Lower leg skin (tissue), 4 donors: ENCODE measurements at regions of chr15 and their contacts with region 1.

Region 1: GRCh38 chr15:25811481-25811906 is 51.6 kb downstream of the ATP10A start:
- DNase-seq: peak in 1 of 2 donors; percentile 54
- H3K4me3 ChIP-seq: no peak overlapping the region
- CTCF ChIP-seq: no peak
- POLR2A ChIP-seq: no peak

Region 2: DNA sequence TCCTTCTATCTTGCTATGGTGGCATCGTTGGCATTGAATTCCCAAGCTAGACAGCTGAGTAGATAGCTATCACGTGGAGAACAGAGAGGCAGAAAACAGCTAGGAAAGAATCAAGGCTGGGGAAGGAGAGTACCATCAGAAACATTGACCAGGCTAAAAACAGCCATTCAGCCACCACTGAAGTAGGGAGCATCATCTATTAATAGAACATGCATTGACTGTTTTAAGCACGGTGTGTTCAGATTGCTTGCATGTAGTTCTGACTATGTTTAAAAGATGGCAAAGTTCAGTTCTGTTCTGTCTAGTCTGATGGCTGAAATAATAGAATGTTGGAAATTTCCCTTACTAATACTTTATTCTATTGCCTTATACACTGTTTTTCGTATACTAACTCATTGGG is 548.4 kb after region 1 on chr15:
- intact Hi-C with region 1: loop called (anchors 5 kb)
- DNase-seq: no peak
- H3K4me3 ChIP-seq: no peak overlapping the region
- CTCF ChIP-seq: no peak
- POLR2A ChIP-seq: no peak